ENCODE measurements at regions of chr11 and their contacts with region 1.

Region 1: GRCh38 chr11:84384731-84385130 is 1098.6 kb upstream of the CCDC90B start:
- DNase-seq: peak; percentile 19
- H3K4me3 Mint-ChIP-seq: no peak overlapping the region
- H3K27ac Mint-ChIP-seq: no peak overlapping the region
- H3K4me1 Mint-ChIP-seq: no peaks in the 10 kb centered on the region
- H3K27me3 Mint-ChIP-seq: no peaks in the 10 kb centered on the region

Region 2: DNA sequence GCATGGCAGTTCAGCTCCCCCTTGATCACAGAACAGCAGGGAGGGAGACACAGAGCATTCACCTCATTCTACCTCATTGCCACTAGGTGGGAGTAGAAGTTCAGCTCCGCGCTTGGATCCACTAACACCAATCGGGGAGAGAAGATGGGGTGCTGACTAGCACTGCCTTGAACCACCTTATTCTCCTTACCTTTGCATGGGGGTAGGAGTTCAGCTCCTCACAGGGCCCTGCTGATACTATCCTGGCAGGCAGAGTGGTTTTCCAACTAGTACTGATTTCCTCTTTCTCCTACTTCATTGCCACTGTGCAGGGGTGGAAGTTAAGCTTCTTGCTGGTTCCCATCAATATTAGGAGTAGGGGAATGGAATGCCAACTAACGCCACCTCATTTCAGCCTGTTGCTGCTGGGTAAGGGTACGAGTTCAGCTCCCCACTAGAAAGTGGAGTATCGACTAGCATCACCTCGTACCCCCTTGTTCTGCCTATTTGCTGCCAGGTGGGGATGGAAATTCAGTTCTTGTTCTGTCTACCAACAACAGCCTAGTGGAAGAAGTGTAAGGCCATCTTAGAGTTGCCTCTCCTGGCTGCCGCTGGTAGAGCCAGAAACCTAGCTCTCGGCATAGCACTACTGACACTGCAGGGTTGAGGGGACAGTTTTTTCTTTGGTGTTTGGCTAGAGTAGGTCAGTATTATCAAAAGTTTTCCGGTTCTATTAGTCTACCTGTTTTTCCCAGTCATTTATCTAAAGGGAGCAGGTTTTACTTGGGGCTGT is 547.7 kb before region 1 on chr11:
- CTCF ChIA-PET with region 1: interaction called, 4 read pairs
- POLR2A ChIA-PET with region 1: no interaction called
- intact Hi-C with region 1: loop called (anchors 2 kb)
- DNase-seq: peak; percentile 19
- H3K4me3 Mint-ChIP-seq: no peak overlapping the region
- H3K27ac Mint-ChIP-seq: no peak overlapping the region
- H3K4me1 Mint-ChIP-seq: no peaks in the 10 kb centered on the region
- H3K27me3 Mint-ChIP-seq: peaks cover 1% of the 10 kb centered on the region

Region 3: DNA sequence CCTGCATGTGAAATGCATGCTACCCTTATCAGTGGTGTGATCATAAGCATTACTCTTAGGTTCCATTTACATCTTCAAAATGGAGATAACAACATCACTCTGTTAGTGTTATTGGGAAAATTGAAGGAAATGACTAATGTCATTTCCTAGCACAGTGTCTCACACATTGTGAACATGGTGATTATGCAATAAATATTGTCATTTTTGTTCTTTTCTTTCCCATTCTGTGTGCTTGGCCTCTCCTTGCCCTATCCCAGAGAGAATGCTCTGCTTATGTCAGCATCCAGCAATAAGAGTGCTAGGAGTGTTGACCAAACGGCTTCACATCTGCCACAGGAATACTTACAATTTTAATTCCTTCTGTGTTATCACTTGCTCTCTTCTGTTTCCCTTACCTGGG is 74.5 kb before region 1 on chr11:
- CTCF ChIA-PET with region 1: no interaction called
- POLR2A ChIA-PET with region 1: no interaction called
- intact Hi-C with region 1: no loop called
- DNase-seq: no peak
- H3K4me3 Mint-ChIP-seq: no peak overlapping the region
- H3K27ac Mint-ChIP-seq: no peak overlapping the region
- H3K4me1 Mint-ChIP-seq: no peaks in the 10 kb centered on the region
- H3K27me3 Mint-ChIP-seq: no peaks in the 10 kb centered on the region

Region 4: GRCh38 chr11:84358034-84358433 is 26.7 kb before region 1 on chr11:
- CTCF ChIA-PET with region 1: no interaction called
- POLR2A ChIA-PET with region 1: no interaction called
- intact Hi-C with region 1: no loop called
- DNase-seq: no peak
- H3K4me3 Mint-ChIP-seq: no peak overlapping the region
- H3K27ac Mint-ChIP-seq: no peak overlapping the region
- H3K4me1 Mint-ChIP-seq: no peaks in the 10 kb centered on the region
- H3K27me3 Mint-ChIP-seq: no peaks in the 10 kb centered on the region

Region 5: DNA sequence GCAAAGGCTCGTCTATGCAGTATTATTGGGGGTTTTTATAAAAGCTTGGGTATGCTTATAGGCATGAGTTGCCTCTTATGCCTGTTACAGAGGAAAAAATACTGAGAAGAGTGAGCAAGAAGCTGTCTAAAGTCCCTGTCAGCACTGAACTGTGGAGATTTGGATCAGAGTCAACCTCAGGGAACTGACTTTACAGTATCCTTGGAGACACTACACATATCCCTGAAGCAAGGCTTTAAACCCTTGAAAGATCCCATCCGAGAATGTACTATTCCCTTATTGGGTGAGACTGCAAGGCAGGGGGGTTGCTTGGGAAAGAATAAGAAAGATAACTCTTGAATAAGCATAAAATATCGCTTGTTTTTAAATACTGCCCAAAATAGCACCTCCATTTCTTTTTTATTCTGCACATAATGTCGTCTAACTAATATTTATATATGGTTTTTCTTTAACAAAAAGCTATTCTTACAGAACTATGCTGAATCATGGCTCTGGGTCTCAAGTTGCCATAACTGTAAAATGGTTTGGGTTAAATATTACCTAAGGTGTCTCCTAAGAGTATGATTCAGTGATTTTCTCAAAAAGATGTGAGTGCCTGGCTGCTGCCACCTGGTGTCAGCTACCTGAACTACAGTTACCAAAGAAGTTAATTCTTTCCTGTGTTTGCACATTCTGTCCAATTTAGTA is 179.6 kb after region 1 on chr11:
- CTCF ChIA-PET with region 1: no interaction called
- POLR2A ChIA-PET with region 1: no interaction called
- intact Hi-C with region 1: loop called (anchors 5 kb)
- DNase-seq: peak; percentile 14
- H3K4me3 Mint-ChIP-seq: no peak overlapping the region
- H3K27ac Mint-ChIP-seq: no peak overlapping the region
- H3K4me1 Mint-ChIP-seq: no peaks in the 10 kb centered on the region
- H3K27me3 Mint-ChIP-seq: no peaks in the 10 kb centered on the region

Region 6: DNA sequence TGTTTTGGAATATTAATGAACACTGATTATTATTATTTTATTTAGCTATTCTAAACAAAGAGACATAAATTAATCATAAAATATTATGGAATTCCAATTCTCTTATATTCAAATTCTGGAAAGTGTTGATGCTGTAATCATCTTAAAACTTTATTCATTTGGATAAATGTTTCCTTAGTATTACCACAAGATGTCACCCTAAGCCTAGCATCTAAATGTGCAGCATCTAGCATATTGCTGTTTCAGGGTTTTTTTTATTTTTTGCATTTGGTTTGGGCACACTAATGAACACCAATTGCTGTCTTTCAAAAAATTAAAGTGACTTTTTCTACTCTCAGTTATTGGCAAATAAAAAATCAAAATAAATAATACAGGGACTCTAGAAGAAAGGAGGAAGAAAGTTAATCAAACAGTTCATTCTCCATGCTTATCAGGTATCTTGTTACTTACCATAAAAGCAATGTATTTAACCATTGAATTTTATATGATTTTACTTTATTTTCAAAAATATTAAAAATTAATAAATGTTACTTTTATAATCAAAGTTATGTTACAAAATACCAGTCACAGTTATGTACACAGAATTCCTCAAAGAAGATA is 1210.7 kb after region 1 on chr11:
- CTCF ChIA-PET with region 1: no interaction called
- POLR2A ChIA-PET with region 1: no interaction called
- intact Hi-C with region 1: loop called (anchors 10 kb)
- DNase-seq: no peak
- H3K4me3 Mint-ChIP-seq: no peak overlapping the region
- H3K27ac Mint-ChIP-seq: no peak overlapping the region
- H3K4me1 Mint-ChIP-seq: no peaks in the 10 kb centered on the region
- H3K27me3 Mint-ChIP-seq: no peaks in the 10 kb centered on the region